ENCODE measurements at regions of chr11 and their contacts with region 1.

Region 1: DNA sequence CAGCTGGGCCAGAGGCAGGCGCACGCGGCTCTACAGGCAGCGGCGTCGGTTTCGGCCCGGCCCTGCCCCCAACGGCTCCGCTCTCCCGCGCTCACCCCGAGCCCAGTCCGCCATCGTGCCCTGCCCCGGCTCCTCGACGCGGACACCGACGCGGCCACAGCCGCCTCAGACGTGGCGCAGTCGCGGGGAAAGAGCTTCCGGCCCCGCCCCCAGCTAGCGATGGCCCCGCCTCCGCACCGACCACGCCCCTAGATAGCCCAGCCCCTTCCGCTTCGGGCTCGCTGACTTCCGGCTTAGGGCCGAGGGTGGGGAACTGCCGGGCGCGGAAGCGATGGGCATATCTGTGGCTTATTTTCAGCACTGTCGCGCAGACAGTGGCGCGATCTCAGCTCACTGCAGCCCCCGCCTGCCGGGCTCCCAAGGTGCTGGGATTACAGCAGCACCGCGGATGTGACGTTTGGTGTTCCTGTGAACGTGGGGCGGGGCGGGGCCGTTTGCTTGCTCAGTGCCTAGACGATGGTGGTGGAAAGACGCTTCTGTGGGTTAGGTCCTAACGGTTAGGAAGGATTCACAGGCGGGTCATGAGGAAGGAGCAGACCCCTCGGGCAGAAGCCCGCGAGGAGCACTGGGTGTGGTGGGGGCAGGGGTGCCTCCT is at the starts of genes BET1L and RIC8A:
- DNase-seq: peak; percentile 97
- H3K4me3 ChIP-seq: peak within 1 kb of the TSS; percentile 68 to 92 (median 74)
- H3K27ac ChIP-seq: peak within 1 kb of the TSS; percentile 96
- H3K4me1 ChIP-seq: peaks cover 23% of the 10 kb centered on the region
- H3K27me3 ChIP-seq: no peaks in the 10 kb centered on the region
- CTCF ChIP-seq: no peak
- POLR2A ChIP-seq: peak; percentile 84
- total RNA-seq, gene BET1L: 31.0 and 35.5 TPM in 2 replicates
- total RNA-seq, gene RIC8A: 112 and 119 TPM in 2 replicates

Region 2: GRCh38 chr11:236774-237767 is 29.7 kb after region 1 on chr11 and contains the start of gene PSMD13:
- CTCF ChIA-PET with region 1: interaction called, 5 read pairs
- POLR2A ChIA-PET with region 1: interaction called, 4 read pairs
- dilution Hi-C with region 1: no loop called
- intact Hi-C with region 1: loop called (anchors 1 kb)
- DNase-seq: peak; percentile 85
- H3K4me3 ChIP-seq: peak within 1 kb of the TSS; percentile 81 to 100 (median 99)
- H3K27ac ChIP-seq: peak within 1 kb of the TSS; percentile 92
- H3K4me1 ChIP-seq: peaks cover 16% of the 10 kb centered on the region
- H3K27me3 ChIP-seq: no peaks in the 10 kb centered on the region
- CTCF ChIP-seq: no peak
- POLR2A ChIP-seq: peak; percentile 83
- total RNA-seq, gene PSMD13: 168 and 179 TPM in 2 replicates

Region 3: DNA sequence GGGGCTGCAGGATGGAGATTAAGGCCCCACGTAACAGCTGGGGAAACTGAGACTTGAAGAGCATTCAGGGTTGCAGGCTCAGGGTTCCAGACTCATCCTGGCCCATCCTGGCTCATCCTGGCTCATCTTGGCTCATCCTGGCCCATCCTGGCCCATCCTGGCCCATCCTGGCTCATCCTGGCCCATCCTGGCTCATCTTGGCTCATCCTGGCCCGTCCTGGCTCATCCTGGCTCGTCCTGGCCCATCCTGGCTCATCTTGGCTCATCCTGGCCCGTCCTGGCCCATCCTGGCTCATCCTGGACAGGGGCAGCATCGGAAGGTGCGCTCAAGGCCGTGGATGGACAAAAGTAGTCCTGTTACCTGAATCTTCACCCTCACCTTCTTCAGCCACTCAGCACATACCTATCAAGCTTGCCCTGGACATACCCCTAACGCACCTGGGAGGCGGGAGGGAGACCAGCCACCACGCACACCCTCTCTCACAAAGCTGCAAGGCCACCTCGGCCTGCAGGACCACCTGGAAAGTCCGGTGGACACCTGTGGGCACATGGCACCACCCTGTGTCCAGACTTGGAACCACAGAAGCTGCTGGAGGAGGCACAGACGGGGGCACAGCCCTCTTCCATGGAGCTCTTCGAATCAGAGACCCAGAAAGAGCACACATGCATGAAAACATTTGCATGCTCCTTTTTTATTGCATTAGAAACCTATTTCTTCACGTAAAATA is 50.6 kb after region 1 on chr11:
- CTCF ChIA-PET with region 1: no interaction called
- POLR2A ChIA-PET with region 1: no interaction called
- dilution Hi-C with region 1: no loop called
- intact Hi-C with region 1: no loop called
- DNase-seq: no peak
- H3K4me3 ChIP-seq: no peak overlapping the region
- H3K27ac ChIP-seq: no peak overlapping the region
- H3K4me1 ChIP-seq: no peaks in the 10 kb centered on the region
- H3K27me3 ChIP-seq: no peaks in the 10 kb centered on the region
- CTCF ChIP-seq: no peak
- POLR2A ChIP-seq: no peak

Region 4: DNA sequence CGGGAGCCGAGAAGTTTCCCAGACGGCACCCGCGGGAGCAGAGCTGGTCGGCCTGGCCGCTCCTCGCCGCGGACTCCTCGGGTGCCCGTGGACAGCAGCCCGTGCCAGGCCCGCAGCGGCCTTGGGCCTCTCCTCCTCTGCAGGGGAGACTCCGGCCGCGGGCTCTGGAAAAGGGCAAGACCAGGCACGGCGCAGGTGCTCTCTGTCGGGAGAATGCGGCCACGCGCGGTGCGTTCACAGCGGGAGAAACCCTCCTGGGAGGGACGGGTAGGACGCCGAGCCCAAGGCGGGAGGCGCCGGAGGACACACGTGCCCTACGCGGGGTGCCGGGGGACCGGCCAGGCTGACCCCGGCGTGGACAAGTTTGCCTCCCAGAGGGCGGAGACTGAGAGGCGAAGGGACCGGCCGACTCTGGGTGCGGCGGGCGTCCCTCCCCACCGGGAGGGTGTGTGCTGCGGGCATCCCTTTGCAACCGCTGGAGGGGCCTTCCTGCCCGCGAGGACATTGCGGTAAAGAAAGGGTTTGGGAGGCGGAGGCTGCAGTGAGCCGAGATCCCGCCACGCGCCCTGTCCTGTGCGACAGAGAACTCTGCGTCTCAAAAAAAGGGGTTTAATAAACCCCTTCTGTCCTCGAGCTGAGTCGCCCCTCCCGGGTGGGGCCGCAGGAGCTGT is 108.8 kb after region 1 on chr11:
- CTCF ChIA-PET with region 1: no interaction called
- POLR2A ChIA-PET with region 1: no interaction called
- dilution Hi-C with region 1: no loop called
- intact Hi-C with region 1: no loop called
- DNase-seq: no peak
- H3K4me3 ChIP-seq: no peak overlapping the region
- H3K27ac ChIP-seq: no peak overlapping the region
- H3K4me1 ChIP-seq: peaks cover 7% of the 10 kb centered on the region
- H3K27me3 ChIP-seq: peaks cover 19 to 28% of the 10 kb centered on the region in 2 experiments
- CTCF ChIP-seq: no peak
- POLR2A ChIP-seq: no peak